ENCODE measurements at regions of chr11 and their contacts with region 1.

Region 1: GRCh38 chr11:107840129-107840484 is 18.5 kb downstream of the SLC35F2 start:
- DNase-seq: no peak
- H3K4me3 ChIP-seq: peak overlapping the region in 2 of 3 experiments; percentile 2 to 49
- H3K27ac ChIP-seq: peak overlapping the region; percentile 91
- H3K4me1 ChIP-seq: peaks cover 37% of the 10 kb centered on the region
- H3K27me3 ChIP-seq: no peaks in the 10 kb centered on the region
- CTCF ChIP-seq: no peak
- POLR2A ChIP-seq: no peak

Region 2: DNA sequence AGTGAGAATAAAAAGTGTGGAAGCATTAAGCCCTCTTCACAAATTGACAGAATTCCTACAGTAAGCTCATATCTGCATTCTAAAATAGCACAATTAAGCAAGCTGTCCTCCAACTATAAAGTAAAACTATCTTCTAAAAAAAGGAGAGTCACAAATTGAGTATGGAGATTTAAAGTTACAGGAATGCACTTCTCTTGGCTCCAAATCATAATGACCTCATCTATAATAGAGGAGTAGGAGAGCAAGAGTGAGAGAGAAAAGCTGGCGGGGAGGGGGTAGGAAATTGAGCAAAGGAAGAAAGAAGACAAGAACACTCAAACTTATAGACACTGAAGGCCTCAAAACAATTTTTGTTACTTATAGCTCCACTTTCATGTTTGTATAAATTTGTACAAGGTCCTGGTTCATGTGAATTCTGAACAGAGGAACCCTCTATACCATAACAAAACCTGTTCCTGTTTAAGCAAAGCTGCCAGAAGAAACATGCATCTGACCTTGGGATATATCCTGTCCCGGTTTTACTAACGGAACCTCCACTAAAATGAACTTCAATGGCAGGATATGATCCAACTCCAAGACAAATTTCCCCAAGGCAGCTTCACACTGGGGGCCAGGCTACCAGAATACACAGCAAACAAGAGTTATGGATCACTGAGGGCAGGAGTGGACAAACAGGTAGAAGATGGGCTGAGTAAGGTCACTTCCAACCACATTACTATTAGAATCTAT is 18.7 kb before region 1 on chr11:
- CTCF ChIA-PET with region 1: interaction called, 14 read pairs
- POLR2A ChIA-PET with region 1: interaction called, 6 read pairs
- dilution Hi-C with region 1: no loop called
- intact Hi-C with region 1: loop called (anchors 1 kb)
- DNase-seq: peak; percentile 97
- H3K4me3 ChIP-seq: peak overlapping the region in 2 of 3 experiments; percentile 16 to 63
- H3K27ac ChIP-seq: peak overlapping the region; percentile 99
- H3K4me1 ChIP-seq: peaks cover 59% of the 10 kb centered on the region
- H3K27me3 ChIP-seq: no peaks in the 10 kb centered on the region
- CTCF ChIP-seq: no peak
- POLR2A ChIP-seq: peak; percentile 52

Region 3: DNA sequence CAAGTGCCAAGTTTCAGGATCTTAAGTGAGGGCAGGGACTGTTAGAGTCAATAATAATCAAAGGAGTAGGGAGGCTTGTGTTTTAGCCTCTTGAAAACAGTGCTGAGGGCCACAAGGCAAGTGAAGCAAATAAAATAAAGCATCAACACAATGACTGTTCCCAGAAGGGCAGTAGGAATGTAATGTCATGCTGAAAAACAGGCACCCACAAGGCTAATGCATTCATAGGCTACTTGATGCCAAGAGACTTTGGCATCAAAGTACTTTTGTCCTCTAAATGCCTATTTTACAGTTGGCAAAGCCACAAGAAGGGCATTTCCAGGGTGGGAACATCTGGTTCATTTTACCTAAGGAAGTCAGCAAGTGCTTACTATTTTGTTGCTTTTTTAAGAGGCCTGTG is 111.0 kb after region 1 on chr11:
- CTCF ChIA-PET with region 1: no interaction called
- POLR2A ChIA-PET with region 1: no interaction called
- dilution Hi-C with region 1: no loop called
- intact Hi-C with region 1: no loop called
- DNase-seq: no peak
- H3K4me3 ChIP-seq: no peak overlapping the region
- H3K27ac ChIP-seq: no peak overlapping the region
- H3K4me1 ChIP-seq: no peaks in the 10 kb centered on the region
- H3K27me3 ChIP-seq: no peaks in the 10 kb centered on the region
- CTCF ChIP-seq: no peak
- POLR2A ChIP-seq: no peak

Region 4: GRCh38 chr11:108101090-108101775 is 261.1 kb after region 1 on chr11:
- CTCF ChIA-PET with region 1: no interaction called
- POLR2A ChIA-PET with region 1: no interaction called
- dilution Hi-C with region 1: no loop called
- intact Hi-C with region 1: no loop called
- DNase-seq: no peak
- H3K4me3 ChIP-seq: no peak overlapping the region
- H3K27ac ChIP-seq: no peak overlapping the region
- H3K4me1 ChIP-seq: no peaks in the 10 kb centered on the region
- H3K27me3 ChIP-seq: no peaks in the 10 kb centered on the region
- CTCF ChIP-seq: no peak
- POLR2A ChIP-seq: no peak

Measured in endothelial cell of umbilical vein (primary cell).